ENCODE measurements at regions of chr14 and their contacts with region 1.

Region 1: GRCh38 chr14:101823511-101824120 is 62.1 kb downstream of the PPP2R5C start:
- DNase-seq: peak; percentile 86
- H3K4me3 Mint-ChIP-seq: peak overlapping the region; percentile 70
- H3K27ac Mint-ChIP-seq: peak overlapping the region; percentile 98
- H3K4me1 Mint-ChIP-seq: peaks cover 86% of the 10 kb centered on the region
- H3K27me3 Mint-ChIP-seq: no peaks in the 10 kb centered on the region

Region 2: DNA sequence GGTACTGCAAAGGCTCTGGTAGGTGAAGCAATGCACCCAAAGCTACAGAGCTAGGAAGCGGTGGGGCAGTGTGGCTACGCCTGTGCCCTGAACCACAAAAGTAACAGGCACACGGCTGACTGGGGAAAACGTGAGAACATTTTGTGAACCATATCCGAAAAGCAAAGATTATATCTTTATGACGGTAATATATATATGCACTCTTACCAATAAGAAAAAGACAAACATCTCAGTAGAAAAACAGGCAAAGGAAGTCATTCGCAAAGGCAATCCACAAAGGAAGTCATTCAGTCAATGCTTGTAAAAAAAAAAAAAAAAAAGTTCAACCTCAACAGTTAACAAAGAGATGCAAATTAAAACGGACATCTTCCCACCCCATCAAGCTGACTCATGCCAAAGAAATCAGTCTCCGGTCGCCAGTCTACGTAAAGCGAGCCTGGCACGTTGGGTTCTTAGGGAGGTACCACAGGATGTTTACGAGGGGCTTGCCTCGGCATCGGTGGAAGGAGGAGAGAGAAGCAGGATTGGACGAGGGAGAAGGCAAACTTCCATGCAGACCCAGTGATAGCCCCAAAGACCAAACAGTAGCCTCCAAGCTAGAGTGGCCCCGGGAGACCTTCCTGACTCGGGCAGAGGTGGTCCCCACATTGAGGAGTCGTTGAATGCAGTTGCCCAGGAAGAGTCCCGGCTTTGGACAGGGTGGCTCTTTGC is 101.5 kb before region 1 on chr14:
- CTCF ChIA-PET with region 1: no interaction called
- intact Hi-C with region 1: loop called (anchors 1 kb)
- DNase-seq: peak; percentile 88
- H3K4me3 Mint-ChIP-seq: peak overlapping the region; percentile 73
- H3K27ac Mint-ChIP-seq: peak overlapping the region; percentile 94
- H3K4me1 Mint-ChIP-seq: peaks cover 35% of the 10 kb centered on the region
- H3K27me3 Mint-ChIP-seq: no peaks in the 10 kb centered on the region

Region 3: DNA sequence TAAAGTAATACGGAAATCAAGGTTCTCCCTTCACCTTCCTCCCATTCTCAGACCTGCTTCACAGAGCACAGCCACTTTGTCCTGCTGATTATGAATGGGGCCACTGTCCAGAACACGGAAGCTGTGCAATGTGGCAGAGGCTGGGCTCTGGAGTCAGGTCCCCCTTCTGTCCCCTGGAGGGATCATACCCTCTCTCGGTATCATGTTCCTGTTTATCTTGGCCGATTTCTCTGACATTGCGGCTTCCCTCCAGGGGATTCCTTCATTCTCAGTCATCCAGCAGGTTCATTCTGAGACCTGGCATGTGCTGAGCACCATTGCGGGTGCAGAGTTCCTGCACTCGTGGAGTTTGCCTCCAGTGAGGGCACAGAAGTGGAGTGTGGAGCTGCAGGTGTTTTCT is 50.8 kb before region 1 on chr14:
- CTCF ChIA-PET with region 1: interaction called, 12 read pairs
- intact Hi-C with region 1: no loop called
- DNase-seq: no peak
- H3K4me3 Mint-ChIP-seq: no peak overlapping the region
- H3K27ac Mint-ChIP-seq: no peak overlapping the region
- H3K4me1 Mint-ChIP-seq: peaks cover 13% of the 10 kb centered on the region
- H3K27me3 Mint-ChIP-seq: no peaks in the 10 kb centered on the region

Region 4: DNA sequence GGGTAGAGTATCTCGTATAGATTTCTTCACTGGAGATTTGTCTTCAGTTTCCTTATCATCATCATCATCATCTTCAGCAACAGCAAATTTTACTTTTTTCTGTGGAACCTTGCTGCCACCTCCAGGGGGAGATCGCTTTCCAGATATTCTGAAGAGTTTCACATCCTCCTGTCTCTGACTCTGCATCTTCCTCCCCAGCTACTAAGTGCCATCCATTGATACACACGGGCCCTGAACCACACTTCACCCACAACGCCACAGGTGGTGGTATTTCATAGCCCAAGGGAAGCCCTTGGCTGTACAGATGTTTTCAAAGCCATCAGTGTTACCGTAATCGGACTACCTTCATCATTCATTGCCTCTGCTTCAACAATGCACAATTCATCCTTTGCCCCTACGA is 20.0 kb after region 1 on chr14:
- CTCF ChIA-PET with region 1: interaction called, 6 read pairs
- intact Hi-C with region 1: loop called (anchors 1 kb)
- DNase-seq: peak; percentile 80
- H3K4me3 Mint-ChIP-seq: no peak overlapping the region
- H3K27ac Mint-ChIP-seq: peak overlapping the region; percentile 74
- H3K4me1 Mint-ChIP-seq: peaks cover 88% of the 10 kb centered on the region
- H3K27me3 Mint-ChIP-seq: no peaks in the 10 kb centered on the region

Region 5: DNA sequence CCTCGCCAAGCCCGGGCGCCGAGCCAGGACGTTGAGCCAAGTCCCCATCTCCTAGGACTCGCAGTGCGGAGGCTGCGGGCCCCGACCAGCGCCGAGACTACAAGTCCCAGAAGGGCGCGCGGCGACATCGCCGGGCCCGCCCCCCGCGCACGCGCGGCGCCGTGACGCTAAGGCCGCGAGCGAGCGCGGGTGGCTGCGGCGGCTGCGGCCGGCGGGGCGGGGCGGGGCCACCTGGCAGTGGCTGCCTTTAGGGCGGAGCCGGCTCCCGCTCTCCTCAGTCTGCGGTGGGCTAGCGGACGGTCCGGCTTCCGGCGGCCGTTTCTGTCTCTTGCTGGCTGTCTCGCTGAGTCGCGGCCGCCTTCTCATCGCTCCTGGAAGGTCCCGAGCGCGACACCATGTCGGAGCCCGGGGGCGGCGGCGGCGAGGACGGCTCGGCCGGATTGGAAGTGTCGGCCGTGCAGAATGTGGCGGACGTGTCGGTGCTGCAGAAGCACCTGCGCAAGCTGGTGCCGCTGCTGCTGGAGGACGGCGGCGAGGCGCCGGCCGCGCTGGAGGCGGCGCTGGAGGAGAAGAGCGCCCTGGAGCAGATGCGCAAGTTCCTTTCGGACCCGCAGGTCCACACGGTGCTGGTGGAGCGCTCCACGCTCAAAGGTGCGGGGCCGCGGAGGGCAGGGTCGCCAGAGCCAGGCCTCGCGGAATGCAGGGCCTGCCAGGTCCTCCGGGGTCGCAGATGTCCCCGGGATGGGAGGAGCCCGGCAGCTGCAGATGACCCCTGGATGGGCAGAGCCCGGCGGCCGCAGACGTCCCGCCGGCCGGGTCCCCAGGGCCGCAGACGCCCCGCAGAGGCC is 140.9 kb after region 1 on chr14 and contains the start of gene DYNC1H1:
- CTCF ChIA-PET with region 1: interaction called, 3 read pairs
- intact Hi-C with region 1: loop called (anchors 2 kb)
- DNase-seq: peak; percentile 86
- H3K4me3 Mint-ChIP-seq: peak within 1 kb of the TSS; percentile 89
- H3K27ac Mint-ChIP-seq: peak within 1 kb of the TSS; percentile 71
- H3K4me1 Mint-ChIP-seq: peaks cover 39% of the 10 kb centered on the region
- H3K27me3 Mint-ChIP-seq: no peaks in the 10 kb centered on the region
- total RNA-seq, gene DYNC1H1: 207 to 208 TPM

Measured in activated naive CD4-positive, alpha-beta T cell treated with anti-CD3 and anti-CD28 coated beads for 36 hours (primary cell).